ENCODE measurements at regions of chr2 and their contacts with region 1.

Region 1: GRCh38 chr2:150487537-150488429 is at the start of gene RND3:
- DNase-seq: peak; percentile 99
- H3K4me3 ChIP-seq: peak within 1 kb of the TSS; percentile 67 to 81 (median 78)
- H3K27ac ChIP-seq: peak within 1 kb of the TSS; percentile 90 to 96 (median 90)
- H3K4me1 ChIP-seq: peaks cover 0 to 28% (median 20%) of the 10 kb centered on the region in 4 donors
- H3K27me3 ChIP-seq: no peaks in the 10 kb centered on the region
- CTCF ChIP-seq: peak; percentile 75 to 90 (median 82)
- EP300 ChIP-seq: no peak
- POLR2A ChIP-seq: peak; percentile 89 to 94
- total RNA-seq, gene RND3: 28.9 to 171 (median 30.5) TPM

Region 2: GRCh38 chr2:149330126-149331022 is 1157.4 kb before region 1 on chr2 and contains the start of gene LYPD6:
- intact Hi-C with region 1: loop called (anchors 5 kb)
- DNase-seq: peak; percentile 82
- H3K4me3 ChIP-seq: peak within 1 kb of the TSS; percentile 44 to 75 (median 66)
- H3K27ac ChIP-seq: peak within 1 kb of the TSS; percentile 28 to 68 (median 56)
- H3K4me1 ChIP-seq: peaks cover 0 to 23% (median 13%) of the 10 kb centered on the region in 4 donors
- H3K27me3 ChIP-seq: peaks cover 0 to 8% (median 7%) of the 10 kb centered on the region in 3 donors
- CTCF ChIP-seq: no peak
- EP300 ChIP-seq: no peak
- POLR2A ChIP-seq: no peak
- total RNA-seq, gene LYPD6: 1.1 to 2.0 (median 1.4) TPM

Region 3: DNA sequence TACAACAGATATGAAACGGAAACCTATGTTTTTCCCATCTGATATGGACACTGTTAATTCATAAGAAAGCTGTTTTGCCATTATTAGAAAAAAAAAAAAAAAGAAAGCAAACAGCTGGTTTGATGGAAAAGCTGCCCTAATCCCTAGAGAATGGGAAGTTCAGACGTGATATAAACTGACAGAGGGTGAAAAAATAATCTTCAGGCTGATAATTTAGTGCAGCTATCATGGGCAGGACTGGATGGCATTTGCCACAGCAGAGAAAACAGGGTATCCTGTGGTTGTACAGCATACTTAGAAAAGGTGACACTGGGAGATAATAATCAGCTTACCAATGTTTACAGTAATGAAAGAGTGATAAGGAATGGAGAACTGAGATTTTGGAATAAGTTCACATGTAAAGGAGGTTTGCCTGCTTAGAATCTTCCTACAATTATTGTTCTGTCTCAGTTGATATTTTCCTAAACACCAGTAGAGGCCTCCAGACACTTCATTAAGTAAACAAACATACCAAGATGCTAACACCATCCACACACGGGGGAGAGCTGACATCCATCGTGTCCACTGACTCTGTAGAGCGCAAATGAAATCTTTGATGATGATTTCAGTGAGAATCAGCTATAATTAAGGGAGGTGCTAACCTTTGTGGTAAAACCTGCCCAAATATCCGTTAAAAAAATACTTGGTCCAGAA is 688.6 kb before region 1 on chr2:
- intact Hi-C with region 1: loop called (anchors 10 kb)
- DNase-seq: no peak
- H3K4me3 ChIP-seq: no peak overlapping the region
- H3K27ac ChIP-seq: no peak overlapping the region
- H3K4me1 ChIP-seq: no peaks in the 10 kb centered on the region
- H3K27me3 ChIP-seq: no peaks in the 10 kb centered on the region
- CTCF ChIP-seq: peak in 2 of 4 experiments; percentile 9 to 17
- EP300 ChIP-seq: no peak
- POLR2A ChIP-seq: no peak

Region 4: DNA sequence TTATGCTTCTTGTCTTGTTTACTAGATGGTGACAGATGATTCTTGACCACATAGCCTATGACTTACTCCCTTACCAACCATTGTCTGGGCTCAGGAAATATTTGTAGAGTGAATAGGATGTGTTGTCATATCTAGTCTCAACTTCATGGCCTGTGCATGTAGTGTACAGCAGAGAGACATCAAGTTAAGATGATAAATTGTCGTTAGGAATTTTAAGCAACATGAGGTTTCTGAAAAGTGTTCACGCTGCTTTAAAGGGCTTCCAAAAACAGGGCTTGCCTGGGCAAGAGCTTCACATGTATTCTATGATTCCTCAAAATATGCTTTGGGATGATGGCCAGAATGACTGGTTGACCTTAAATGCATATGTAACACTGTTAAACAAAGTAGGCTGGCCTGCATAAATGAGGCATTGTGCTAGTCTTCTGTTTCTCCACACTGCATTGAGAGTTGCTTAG is 424.3 kb before region 1 on chr2:
- intact Hi-C with region 1: loop called (anchors 10 kb)
- DNase-seq: no peak
- H3K4me3 ChIP-seq: no peak overlapping the region
- H3K27ac ChIP-seq: peak overlapping the region in 1 of 4 donors; percentile 20
- H3K4me1 ChIP-seq: peaks cover 0 to 24% (median 13%) of the 10 kb centered on the region in 4 donors
- H3K27me3 ChIP-seq: no peaks in the 10 kb centered on the region
- CTCF ChIP-seq: no peak
- EP300 ChIP-seq: no peak
- POLR2A ChIP-seq: no peak

Region 5: DNA sequence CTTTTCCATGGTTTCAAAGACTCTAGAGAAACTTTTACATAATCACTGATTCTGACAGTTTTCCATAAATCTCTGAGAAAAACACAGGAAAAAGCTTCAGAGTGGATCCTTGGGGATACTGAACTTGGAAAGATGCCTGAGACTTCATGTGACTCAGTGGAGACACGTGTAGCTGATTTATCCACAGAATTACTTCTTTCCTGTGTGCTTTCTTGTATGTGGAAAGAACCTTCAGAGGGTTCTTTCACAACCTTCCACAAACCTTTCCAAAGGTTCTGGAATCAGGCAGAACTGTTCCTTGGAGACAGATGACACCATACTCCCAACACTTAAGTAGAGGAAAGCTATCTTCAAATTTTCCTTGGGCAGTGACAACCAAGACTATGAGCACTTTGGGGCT is 207.6 kb before region 1 on chr2:
- intact Hi-C with region 1: loop called (anchors 5 kb)
- DNase-seq: peak; percentile 76
- H3K4me3 ChIP-seq: no peak overlapping the region
- H3K27ac ChIP-seq: peak overlapping the region in 2 of 4 donors; percentile 1 to 42
- H3K4me1 ChIP-seq: peaks cover 0 to 12% (median 8%) of the 10 kb centered on the region in 4 donors
- H3K27me3 ChIP-seq: no peaks in the 10 kb centered on the region
- CTCF ChIP-seq: no peak
- EP300 ChIP-seq: no peak
- POLR2A ChIP-seq: no peak

Region 6: DNA sequence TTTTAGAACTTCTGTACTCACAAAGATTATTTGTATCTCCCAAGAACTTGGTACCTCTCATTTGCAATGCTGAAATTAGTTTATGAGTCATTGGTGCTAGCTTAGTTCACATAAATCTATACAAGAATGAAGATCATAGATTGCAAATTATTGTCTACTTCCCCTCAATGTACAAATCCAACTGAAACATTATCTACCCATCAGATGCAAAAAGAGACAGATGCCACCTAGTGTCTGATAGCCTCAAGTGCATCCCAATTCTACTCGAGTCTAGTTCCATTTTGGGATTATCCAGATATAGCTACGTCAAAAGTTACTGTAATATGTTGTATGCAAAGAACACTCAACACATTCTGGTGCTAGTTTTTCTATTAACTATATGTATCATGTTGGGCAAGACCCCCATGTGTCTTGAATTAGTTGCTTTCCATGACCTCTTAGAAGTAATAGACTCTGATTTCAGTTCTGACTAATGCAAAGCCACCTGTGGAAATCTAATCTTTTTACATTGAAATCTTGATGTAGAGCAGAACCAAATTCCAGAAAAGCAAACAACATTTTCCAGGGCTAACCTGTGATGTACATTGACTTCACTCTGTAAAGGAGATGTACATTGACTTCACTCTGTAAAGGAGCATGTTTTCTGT is 563.9 kb after region 1 on chr2:
- intact Hi-C with region 1: loop called (anchors 5 kb)
- DNase-seq: no peak
- H3K4me3 ChIP-seq: no peak overlapping the region
- H3K27ac ChIP-seq: no peak overlapping the region
- H3K4me1 ChIP-seq: peaks cover 0 to 19% (median 2%) of the 10 kb centered on the region in 4 donors
- H3K27me3 ChIP-seq: no peaks in the 10 kb centered on the region
- CTCF ChIP-seq: peak; percentile 35 to 73 (median 66)
- EP300 ChIP-seq: no peak
- POLR2A ChIP-seq: no peak

Region 7: GRCh38 chr2:151828143-151828889 is 1340.5 kb after region 1 on chr2 and contains the start of gene ARL5A:
- intact Hi-C with region 1: no loop called
- DNase-seq: peak; percentile 98
- H3K4me3 ChIP-seq: peak within 1 kb of the TSS; percentile 82 to 98 (median 92)
- H3K27ac ChIP-seq: peak within 1 kb of the TSS; percentile 88 to 90 (median 88)
- H3K4me1 ChIP-seq: peaks cover 0 to 40% (median 28%) of the 10 kb centered on the region in 4 donors
- H3K27me3 ChIP-seq: no peaks in the 10 kb centered on the region
- CTCF ChIP-seq: no peak
- EP300 ChIP-seq: no peak
- POLR2A ChIP-seq: peak; percentile 53 to 63
- total RNA-seq, gene ARL5A: 41.3 to 46.4 (median 43.9) TPM